PC-9 (cell line): ENCODE measurements at regions of chr1 and their contacts with region 1.

Region 1: GRCh38 chr1:208238710-208239472 is 5.3 kb downstream of the PLXNA2 start:
- DNase-seq: no peak
- H3K4me3 ChIP-seq: no peak overlapping the region
- H3K27ac ChIP-seq: no peak overlapping the region
- H3K4me1 ChIP-seq: peaks cover 49% of the 10 kb centered on the region
- H3K27me3 ChIP-seq: no peaks in the 10 kb centered on the region
- CTCF ChIP-seq: peak; percentile 83

Region 2: DNA sequence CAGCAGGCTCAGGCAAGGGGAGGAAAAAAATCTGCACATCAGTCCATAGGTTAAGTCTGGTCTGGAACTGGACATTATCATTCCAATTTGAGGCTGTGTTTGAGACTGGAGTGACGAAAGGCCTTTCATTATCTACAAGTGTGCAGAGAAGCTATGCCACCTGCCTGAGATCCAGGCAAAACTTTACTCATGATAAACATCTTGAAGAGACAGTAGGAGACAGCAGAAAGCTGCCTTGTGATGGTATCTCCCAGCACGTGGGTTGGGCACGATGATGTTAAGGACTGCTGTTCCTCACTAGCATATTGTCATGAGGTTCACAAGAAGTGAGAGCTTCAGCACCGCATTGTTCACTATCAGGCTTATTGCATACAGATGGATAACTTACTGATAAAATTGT is 121.1 kb before region 1 on chr1:
- CTCF ChIA-PET with region 1: interaction called, 15 read pairs
- POLR2A ChIA-PET with region 1: no interaction called
- intact Hi-C with region 1: no loop called
- DNase-seq: no peak
- H3K4me3 ChIP-seq: no peak overlapping the region
- H3K27ac ChIP-seq: no peak overlapping the region
- H3K4me1 ChIP-seq: peaks cover 33% of the 10 kb centered on the region
- H3K27me3 ChIP-seq: no peaks in the 10 kb centered on the region
- CTCF ChIP-seq: no peak

Region 3: GRCh38 chr1:208132287-208132883 is 106.5 kb before region 1 on chr1:
- CTCF ChIA-PET with region 1: interaction called, 7 read pairs
- POLR2A ChIA-PET with region 1: interaction called, 4 read pairs
- intact Hi-C with region 1: loop called (anchors 1 kb)
- DNase-seq: peak; percentile 75 to 90
- H3K4me3 ChIP-seq: peak overlapping the region; percentile 9; the same call in 1 of the 2 replicates
- H3K27ac ChIP-seq: peak overlapping the region; percentile 49
- H3K4me1 ChIP-seq: peaks cover 42% of the 10 kb centered on the region
- H3K27me3 ChIP-seq: no peaks in the 10 kb centered on the region
- CTCF ChIP-seq: peak; percentile 98

Region 4: GRCh38 chr1:208170252-208170651 is 68.6 kb before region 1 on chr1:
- CTCF ChIA-PET with region 1: no interaction called
- POLR2A ChIA-PET with region 1: interaction called, 12 read pairs
- intact Hi-C with region 1: no loop called
- DNase-seq: no peak
- H3K4me3 ChIP-seq: no peak overlapping the region
- H3K27ac ChIP-seq: no peak overlapping the region
- H3K4me1 ChIP-seq: peaks cover 20% of the 10 kb centered on the region
- H3K27me3 ChIP-seq: no peaks in the 10 kb centered on the region
- CTCF ChIP-seq: no peak

Region 5: GRCh38 chr1:208207388-208208131 is 31.3 kb before region 1 on chr1:
- CTCF ChIA-PET with region 1: interaction called, 4 read pairs
- POLR2A ChIA-PET with region 1: interaction called, 3 read pairs
- intact Hi-C with region 1: loop called (anchors 1 kb)
- DNase-seq: peak in 1 of 2 experiments; percentile 53
- H3K4me3 ChIP-seq: no peak overlapping the region
- H3K27ac ChIP-seq: peak overlapping the region; percentile 20; the same call in 1 of the 2 replicates
- H3K4me1 ChIP-seq: peaks cover 44% of the 10 kb centered on the region
- H3K27me3 ChIP-seq: no peaks in the 10 kb centered on the region
- CTCF ChIP-seq: no peak

Region 6: DNA sequence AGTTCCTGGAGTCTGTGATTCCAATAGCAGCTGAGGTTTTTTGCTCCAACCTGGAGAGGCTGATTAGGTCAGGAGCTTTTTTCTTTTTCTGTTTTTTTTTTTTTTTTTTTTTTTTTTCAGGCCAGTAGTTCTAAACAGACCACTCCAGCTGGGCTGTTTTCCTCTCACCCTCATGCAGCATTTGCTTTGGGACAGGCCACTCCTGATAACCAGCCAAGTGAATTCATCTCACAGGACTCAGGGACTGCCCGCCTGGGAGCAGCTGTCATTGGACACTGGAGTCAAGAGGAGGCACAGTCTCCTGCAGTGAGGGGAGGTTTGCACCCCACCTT is 17.6 kb before region 1 on chr1:
- CTCF ChIA-PET with region 1: interaction called, 3 read pairs
- POLR2A ChIA-PET with region 1: interaction called, 3 read pairs
- intact Hi-C with region 1: loop called (anchors 1 kb)
- DNase-seq: no peak
- H3K4me3 ChIP-seq: no peak overlapping the region
- H3K27ac ChIP-seq: peak overlapping the region; percentile 91
- H3K4me1 ChIP-seq: peaks cover 59% of the 10 kb centered on the region
- H3K27me3 ChIP-seq: no peaks in the 10 kb centered on the region
- CTCF ChIP-seq: no peak

Region 7: DNA sequence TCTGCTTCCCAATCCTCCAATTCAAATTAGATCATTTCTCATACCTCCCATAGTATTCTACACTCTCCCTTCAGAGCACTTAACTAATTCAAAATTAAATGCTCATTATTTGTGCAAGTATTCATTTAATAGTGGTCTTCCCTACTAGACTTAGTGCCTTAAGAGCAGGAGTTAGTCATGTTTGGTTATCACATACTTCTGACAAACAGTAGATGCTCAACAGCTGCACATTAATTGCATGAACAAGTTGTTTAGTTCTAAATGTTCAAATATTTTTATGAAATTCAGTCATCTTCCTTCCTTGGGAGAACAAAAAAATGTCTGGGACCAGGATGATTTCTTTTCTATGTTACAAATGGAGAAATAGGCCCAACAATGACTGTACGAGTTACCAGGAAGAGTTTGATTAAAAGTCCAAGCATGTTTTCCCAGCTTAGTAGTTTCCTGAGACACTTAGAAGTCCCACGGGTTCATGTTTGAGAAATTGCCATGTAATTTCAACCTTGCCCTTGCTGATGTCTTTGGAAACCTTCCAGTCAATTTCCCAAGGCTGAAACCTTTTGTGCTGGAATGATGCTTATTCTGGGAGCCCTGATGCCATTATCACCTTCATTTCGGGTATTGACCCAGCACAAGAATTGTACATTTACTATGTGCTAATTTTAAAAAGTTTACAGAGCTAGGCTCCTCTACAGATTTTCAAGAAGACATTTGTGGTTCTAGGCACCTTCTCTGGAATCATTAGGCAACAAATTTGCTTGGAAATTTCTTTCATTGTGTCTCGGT is 443.2 kb after region 1 on chr1:
- CTCF ChIA-PET with region 1: interaction called, 16 read pairs
- POLR2A ChIA-PET with region 1: no interaction called
- intact Hi-C with region 1: no loop called
- DNase-seq: no peak
- H3K4me3 ChIP-seq: no peak overlapping the region
- H3K27ac ChIP-seq: no peak overlapping the region
- H3K4me1 ChIP-seq: no peaks in the 10 kb centered on the region
- H3K27me3 ChIP-seq: peaks cover 31% of the 10 kb centered on the region
- CTCF ChIP-seq: no peak